ENCODE measurements at regions of chr22 and their contacts with region 1.

Region 1: DNA sequence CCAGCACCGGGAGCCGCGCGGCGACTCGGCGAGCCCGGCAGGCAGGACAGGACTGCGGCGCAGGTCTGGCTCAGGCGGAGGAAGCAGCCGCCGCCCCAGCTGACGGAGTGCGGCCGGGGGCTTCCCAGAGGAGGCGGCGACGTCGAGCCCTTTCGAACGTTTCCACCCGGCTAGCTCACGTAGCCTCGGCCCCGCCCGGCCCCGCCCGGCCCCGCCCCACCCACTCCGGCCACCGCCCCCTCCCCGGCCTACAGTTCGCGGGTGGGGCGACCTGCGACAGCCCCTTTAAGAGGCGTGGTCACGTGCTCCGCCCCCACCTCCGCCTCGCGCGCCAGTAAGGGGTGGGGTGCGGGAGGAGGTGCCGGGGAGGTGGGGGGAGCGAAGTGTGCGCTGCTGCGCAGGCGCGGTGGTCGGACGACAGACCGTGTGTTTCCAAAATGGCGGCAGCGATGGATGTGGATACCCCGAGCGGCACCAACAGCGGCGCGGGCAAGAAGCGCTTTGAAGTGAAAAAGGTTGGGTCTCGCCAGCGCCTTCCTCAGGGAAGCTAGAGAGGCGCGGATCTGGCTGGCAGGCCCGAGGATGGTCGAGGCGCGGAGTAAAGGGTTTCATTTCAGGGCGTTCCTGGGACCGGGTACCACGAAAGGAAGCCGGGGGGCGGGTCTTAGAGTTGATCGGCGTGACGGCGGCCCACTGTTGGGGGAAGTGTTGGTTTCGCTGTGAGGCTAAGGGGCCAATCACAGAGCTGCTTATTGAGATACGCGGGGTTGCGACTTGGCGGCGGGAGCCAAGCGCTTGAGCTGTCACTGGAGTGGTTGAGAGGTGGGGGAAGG is at the start of gene RBX1:
- DNase-seq: peak; percentile 94 to 99
- H3K4me3 ChIP-seq: peak within 1 kb of the TSS; percentile 87 to 98 (median 92)
- H3K27ac ChIP-seq: peak within 1 kb of the TSS; percentile 95
- H3K4me1 ChIP-seq: peaks cover 0 to 2% (median under 1%) of the 10 kb centered on the region in 4 experiments; a peak in 3 of 7 replicates
- H3K27me3 ChIP-seq: no peaks in the 10 kb centered on the region
- CTCF ChIP-seq: no peak
- EP300 ChIP-seq: no peak
- POLR2A ChIP-seq: peak; percentile 54 to 84
- RAD21 ChIP-seq: no peak; a peak in 1 of 4 replicates
- total RNA-seq, gene RBX1: 74.4 and 76.5 TPM in 2 replicates

Region 2: GRCh38 chr22:40898850-40899357 is 52.3 kb before region 1 on chr22:
- CTCF ChIA-PET with region 1: no interaction called
- POLR2A ChIA-PET with region 1: no interaction called
- DNase-seq: no peak
- H3K4me3 ChIP-seq: no peak overlapping the region
- H3K27ac ChIP-seq: no peak overlapping the region
- H3K4me1 ChIP-seq: no peaks in the 10 kb centered on the region
- H3K27me3 ChIP-seq: no peaks in the 10 kb centered on the region
- CTCF ChIP-seq: peak in 1 of 3 experiments; percentile 46; a peak in 2 of 4 replicates
- EP300 ChIP-seq: no peak
- POLR2A ChIP-seq: no peak
- RAD21 ChIP-seq: peak; percentile 61 to 74

Region 3: DNA sequence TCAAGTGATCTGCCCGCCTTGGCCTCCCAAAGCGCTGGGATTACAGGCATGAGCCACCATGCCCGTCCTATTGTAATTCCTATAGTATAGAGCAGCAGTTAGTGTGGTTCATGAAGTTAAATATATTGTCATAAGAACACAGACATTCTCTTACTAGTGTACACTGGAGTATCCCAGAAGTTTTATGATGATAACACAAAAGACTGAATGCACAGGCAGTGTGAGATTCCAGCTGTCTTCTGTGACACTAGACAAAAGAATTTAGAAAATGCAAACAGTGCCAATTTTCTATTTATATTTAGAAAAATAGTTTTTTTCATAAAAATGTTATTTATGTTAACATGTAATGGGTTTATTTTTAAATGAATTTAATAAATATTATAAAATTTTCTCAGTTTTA is 39.4 kb before region 1 on chr22:
- CTCF ChIA-PET with region 1: no interaction called
- POLR2A ChIA-PET with region 1: no interaction called
- DNase-seq: no peak
- H3K4me3 ChIP-seq: no peak overlapping the region
- H3K27ac ChIP-seq: no peak overlapping the region
- H3K4me1 ChIP-seq: peaks cover 0 to 3% (median 0%) of the 10 kb centered on the region in 4 experiments; a peak in 1 of 7 replicates
- H3K27me3 ChIP-seq: no peaks in the 10 kb centered on the region
- CTCF ChIP-seq: no peak
- EP300 ChIP-seq: no peak
- POLR2A ChIP-seq: no peak
- RAD21 ChIP-seq: no peak

Region 4: DNA sequence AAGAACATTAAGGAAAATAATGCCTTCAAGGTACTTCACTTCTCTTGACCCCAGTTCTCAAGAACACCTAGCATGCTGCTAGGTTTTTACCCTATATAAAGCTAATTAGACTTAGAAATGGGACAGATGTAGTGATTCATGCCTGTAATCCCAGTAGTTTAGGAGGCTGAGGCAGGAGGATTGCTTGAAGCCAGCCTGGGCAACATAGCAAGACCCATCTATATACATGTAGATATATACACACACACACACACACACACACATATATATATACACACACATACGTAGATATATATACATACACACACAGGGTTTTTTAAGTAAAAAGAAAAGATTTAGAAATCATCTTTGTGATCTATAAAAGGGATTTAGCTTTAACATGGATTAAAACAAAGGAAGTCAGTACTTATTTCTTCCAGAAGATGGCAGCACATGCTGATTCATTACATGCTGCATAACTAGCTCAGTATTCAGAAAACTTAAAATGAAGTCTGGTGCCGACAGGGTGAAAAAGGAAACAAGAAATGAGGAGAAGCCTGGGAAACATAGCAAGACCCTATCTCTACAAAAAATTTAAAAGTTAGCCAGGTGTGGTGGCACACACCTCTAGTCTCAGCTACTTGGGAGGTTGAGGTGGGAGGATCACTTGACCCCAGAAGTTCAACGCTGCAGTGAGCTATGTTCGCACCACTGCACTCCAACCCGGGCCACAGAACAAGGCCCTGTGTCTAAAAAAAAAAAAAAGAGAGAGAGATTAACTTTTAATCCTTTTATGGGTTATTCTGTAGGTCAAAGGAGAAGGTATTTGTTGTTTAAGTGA is 28.5 kb before region 1 on chr22:
- CTCF ChIA-PET with region 1: interaction called, 10 read pairs
- POLR2A ChIA-PET with region 1: interaction called, 5 read pairs
- DNase-seq: no peak
- H3K4me3 ChIP-seq: no peak overlapping the region
- H3K27ac ChIP-seq: no peak overlapping the region
- H3K4me1 ChIP-seq: no peaks in the 10 kb centered on the region
- H3K27me3 ChIP-seq: no peaks in the 10 kb centered on the region
- CTCF ChIP-seq: peak in 2 of 3 experiments; percentile 23 to 56; a peak in 2 of 4 replicates
- EP300 ChIP-seq: no peak
- POLR2A ChIP-seq: no peak
- RAD21 ChIP-seq: peak; percentile 66 to 68

Region 5: GRCh38 chr22:40939202-40939601 is 12.0 kb before region 1 on chr22:
- CTCF ChIA-PET with region 1: interaction called, 4 read pairs
- POLR2A ChIA-PET with region 1: interaction called, 10 read pairs
- DNase-seq: no peak
- H3K4me3 ChIP-seq: no peak overlapping the region
- H3K27ac ChIP-seq: no peak overlapping the region
- H3K4me1 ChIP-seq: no peaks in the 10 kb centered on the region
- H3K27me3 ChIP-seq: no peaks in the 10 kb centered on the region
- CTCF ChIP-seq: no peak
- EP300 ChIP-seq: no peak
- POLR2A ChIP-seq: no peak
- RAD21 ChIP-seq: no peak

Region 6: GRCh38 chr22:40965936-40966725 is 15.0 kb after region 1 on chr22:
- CTCF ChIA-PET with region 1: interaction called, 4 read pairs
- POLR2A ChIA-PET with region 1: interaction called, 12 read pairs
- DNase-seq: no peak
- H3K4me3 ChIP-seq: no peak overlapping the region
- H3K27ac ChIP-seq: no peak overlapping the region
- H3K4me1 ChIP-seq: no peaks in the 10 kb centered on the region
- H3K27me3 ChIP-seq: no peaks in the 10 kb centered on the region
- CTCF ChIP-seq: no peak
- EP300 ChIP-seq: no peak
- POLR2A ChIP-seq: no peak
- RAD21 ChIP-seq: no peak

Region 7: GRCh38 chr22:41091132-41092022 is 140.2 kb after region 1 on chr22:
- CTCF ChIA-PET with region 1: no interaction called
- POLR2A ChIA-PET with region 1: interaction called, 44 read pairs
- DNase-seq: peak; percentile 96 to 98
- H3K4me3 ChIP-seq: peak overlapping the region; percentile 81 to 93 (median 87)
- H3K27ac ChIP-seq: peak overlapping the region; percentile 100
- H3K4me1 ChIP-seq: no peaks in the 10 kb centered on the region; a peak in 3 of 7 replicates
- H3K27me3 ChIP-seq: no peaks in the 10 kb centered on the region
- CTCF ChIP-seq: no peak
- EP300 ChIP-seq: 0 out of 3 replicates have a peak, but pooled peaks of 1 of the 2 experiments have one; percentile 22
- POLR2A ChIP-seq: peak; percentile 78 to 80
- RAD21 ChIP-seq: no peak

Measured in H1 (cell line).